SK-N-SH (cell line): ENCODE measurements at regions of chr1 and their contacts with region 1.

Region 1: DNA sequence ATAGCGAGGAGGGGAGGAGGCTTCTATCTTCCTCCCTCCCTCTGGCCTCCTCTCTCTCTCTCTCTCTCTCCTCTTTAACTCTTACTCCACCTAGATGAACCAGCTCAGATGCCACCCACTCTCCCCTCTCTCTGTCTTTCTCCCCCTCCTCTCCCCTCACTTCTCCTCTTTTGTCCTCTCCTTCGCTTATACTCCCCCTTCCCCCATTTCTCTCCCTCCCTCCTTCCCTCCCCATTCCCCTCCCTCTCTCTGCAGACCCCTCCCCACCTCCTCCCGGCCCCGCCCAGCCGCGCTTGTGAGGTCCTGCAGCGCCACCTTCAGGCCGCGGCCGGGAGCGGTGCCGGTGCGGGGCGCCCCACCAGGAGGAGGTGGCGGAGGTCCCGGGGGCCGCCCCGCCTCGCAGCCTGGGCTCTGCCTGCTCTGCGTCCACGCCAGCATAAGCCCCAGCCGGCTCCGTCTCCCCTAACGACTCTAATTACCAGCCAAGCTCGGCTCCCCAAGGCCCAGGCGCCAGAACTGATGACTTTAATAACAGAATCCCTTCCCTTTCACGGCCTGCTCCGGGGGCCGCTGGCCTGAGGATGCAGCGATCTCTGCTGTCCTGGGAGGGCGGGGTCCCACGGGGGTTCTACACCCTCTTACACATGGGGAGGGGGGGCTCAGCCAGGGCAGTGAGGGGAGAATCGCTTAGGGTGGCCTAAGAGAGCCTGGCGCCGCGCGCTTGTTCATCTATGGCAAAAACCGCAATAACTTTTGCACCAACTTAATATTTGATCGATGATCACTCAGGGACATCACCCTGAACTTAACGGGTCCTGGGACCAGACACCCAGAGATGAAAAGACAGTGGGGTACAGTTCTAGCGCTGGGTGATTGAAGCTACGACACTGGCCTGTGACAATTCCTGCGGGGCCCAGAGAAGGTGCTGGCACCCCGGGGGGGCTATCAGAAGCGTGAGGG is 637.3 kb downstream of the MATN1 start:
- DNase-seq: peak; percentile 93
- H3K4me3 ChIP-seq: peak overlapping the region; percentile 39 to 58
- H3K27ac ChIP-seq: peak overlapping the region in 1 of 2 experiments; percentile 31; a peak in 1 of 4 replicates
- H3K4me1 ChIP-seq: peaks cover 35 to 46% of the 10 kb centered on the region in 2 experiments; a peak in 3 of 4 replicates
- H3K27me3 ChIP-seq: no peaks in the 10 kb centered on the region
- CTCF ChIP-seq: peak; percentile 87
- EP300 ChIP-seq: no peak
- RAD21 ChIP-seq: peak; percentile 77

Region 2: GRCh38 chr1:29235955-29236684 is 850.0 kb before region 1 on chr1 and contains the start of gene PTPRU:
- CTCF ChIA-PET with region 1: interaction called, 26 read pairs
- POLR2A ChIA-PET with region 1: no interaction called
- DNase-seq: peak; percentile 98
- H3K4me3 ChIP-seq: peak within 1 kb of the TSS; percentile 49 to 89
- H3K27ac ChIP-seq: peak within 1 kb of the TSS in 1 of 2 experiments; percentile 29; a peak in 1 of 4 replicates
- H3K4me1 ChIP-seq: peaks cover 6 to 37% of the 10 kb centered on the region in 2 experiments; a peak in 2 of 4 replicates
- H3K27me3 ChIP-seq: peaks cover 6% of the 10 kb centered on the region
- CTCF ChIP-seq: peak; percentile 58
- EP300 ChIP-seq: no peak
- RAD21 ChIP-seq: peak; percentile 86
- polyA plus RNA-seq, gene PTPRU: 2.9 and 3.5 TPM in 2 replicates

Region 3: GRCh38 chr1:29802181-29803068 is 283.7 kb before region 1 on chr1:
- CTCF ChIA-PET with region 1: interaction called, 14 read pairs
- POLR2A ChIA-PET with region 1: no interaction called
- DNase-seq: peak; percentile 37
- H3K4me3 ChIP-seq: no peak overlapping the region
- H3K27ac ChIP-seq: no peak overlapping the region; a peak in 1 of 4 replicates
- H3K4me1 ChIP-seq: peaks cover 0 to 45% of the 10 kb centered on the region in 2 experiments; a peak in 2 of 4 replicates
- H3K27me3 ChIP-seq: no peaks in the 10 kb centered on the region
- CTCF ChIP-seq: no peak
- EP300 ChIP-seq: no peak
- RAD21 ChIP-seq: no peak

Region 4: GRCh38 chr1:30058632-30059574 is 27.2 kb before region 1 on chr1:
- CTCF ChIA-PET with region 1: interaction called, 10 read pairs
- POLR2A ChIA-PET with region 1: no interaction called
- DNase-seq: no peak
- H3K4me3 ChIP-seq: no peak overlapping the region
- H3K27ac ChIP-seq: no peak overlapping the region
- H3K4me1 ChIP-seq: peaks cover 2 to 5% of the 10 kb centered on the region in 2 experiments; a peak in 2 of 4 replicates
- H3K27me3 ChIP-seq: no peaks in the 10 kb centered on the region; the same call in 1 of the 2 replicates
- CTCF ChIP-seq: no peak
- EP300 ChIP-seq: no peak
- RAD21 ChIP-seq: no peak

Region 5: DNA sequence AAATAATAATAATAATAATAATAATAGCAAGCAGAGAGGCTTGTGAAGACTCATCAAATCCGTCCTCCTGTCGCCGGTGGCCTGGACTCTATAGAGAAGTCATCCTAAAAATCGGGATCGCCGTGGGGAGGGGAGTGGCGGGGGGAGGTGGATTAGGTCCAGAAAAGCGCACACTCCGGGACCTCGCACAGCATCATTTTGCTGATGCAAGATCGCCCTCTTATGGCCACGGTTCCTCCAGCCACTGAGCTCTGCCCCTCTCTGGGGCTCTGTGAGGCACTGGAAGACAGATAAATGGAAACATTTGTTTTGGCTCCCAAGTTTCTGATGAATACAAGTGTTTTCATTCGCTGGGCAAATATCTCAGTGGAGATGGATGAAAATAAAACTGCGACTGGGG is 25.3 kb after region 1 on chr1:
- CTCF ChIA-PET with region 1: interaction called, 47 read pairs
- POLR2A ChIA-PET with region 1: interaction called, 3 read pairs
- DNase-seq: peak; percentile 76
- H3K4me3 ChIP-seq: no peak overlapping the region
- H3K27ac ChIP-seq: no peak overlapping the region
- H3K4me1 ChIP-seq: peaks cover 0 to 23% of the 10 kb centered on the region in 2 experiments; a peak in 3 of 4 replicates
- H3K27me3 ChIP-seq: no peaks in the 10 kb centered on the region
- CTCF ChIP-seq: peak; percentile 63
- EP300 ChIP-seq: no peak
- RAD21 ChIP-seq: peak; percentile 87